RWPE1 (cell line): ENCODE measurements at regions of chr6 and their contacts with region 1.

Region 1: DNA sequence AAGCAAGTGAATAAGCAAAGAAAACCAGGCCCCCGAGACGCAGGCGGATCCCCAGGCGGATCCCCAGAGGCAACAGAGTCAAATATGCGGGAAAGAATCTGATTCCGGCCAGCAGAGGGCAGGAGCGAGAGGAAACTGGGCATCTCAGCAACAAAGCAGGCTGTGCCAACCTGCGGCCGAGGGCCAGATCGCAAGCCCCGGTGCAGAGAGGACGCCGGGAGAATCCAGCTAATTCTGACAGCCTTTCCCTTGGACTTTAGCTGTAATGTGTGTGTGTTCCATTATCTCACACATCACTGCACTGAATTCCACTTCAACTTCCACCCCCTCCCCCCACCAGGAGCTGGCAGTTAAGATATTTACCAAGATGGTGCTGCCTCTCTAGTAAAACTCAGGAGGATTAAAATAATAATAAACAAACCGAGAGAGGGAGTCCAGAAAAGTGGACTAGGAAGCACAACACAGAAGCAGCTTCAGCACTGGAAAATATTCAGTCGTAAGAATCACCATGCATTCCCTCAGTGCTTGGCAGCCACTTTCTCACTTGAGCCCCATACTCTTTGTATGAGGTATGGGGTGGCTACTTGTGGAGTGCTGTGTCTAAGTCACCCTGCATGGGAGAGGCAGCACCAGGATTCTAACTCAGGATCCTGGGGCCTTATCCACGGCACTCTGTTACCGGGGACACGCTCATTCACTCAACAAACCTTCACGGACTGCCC is 66.2 kb upstream of the SNX9 start:
- DNase-seq: peak; percentile 69
- H3K27ac ChIP-seq: no peak overlapping the region
- CTCF ChIP-seq: peak; percentile 91

Region 2: GRCh38 chr6:157648561-157648960 is 108.3 kb before region 1 on chr6:
- CTCF ChIA-PET with region 1: interaction called, 10 read pairs
- POLR2A ChIA-PET with region 1: no interaction called
- DNase-seq: peak; percentile 44
- H3K27ac ChIP-seq: peak overlapping the region; percentile 25; the same call in 1 of the 2 replicates
- CTCF ChIP-seq: no peak

Region 3: DNA sequence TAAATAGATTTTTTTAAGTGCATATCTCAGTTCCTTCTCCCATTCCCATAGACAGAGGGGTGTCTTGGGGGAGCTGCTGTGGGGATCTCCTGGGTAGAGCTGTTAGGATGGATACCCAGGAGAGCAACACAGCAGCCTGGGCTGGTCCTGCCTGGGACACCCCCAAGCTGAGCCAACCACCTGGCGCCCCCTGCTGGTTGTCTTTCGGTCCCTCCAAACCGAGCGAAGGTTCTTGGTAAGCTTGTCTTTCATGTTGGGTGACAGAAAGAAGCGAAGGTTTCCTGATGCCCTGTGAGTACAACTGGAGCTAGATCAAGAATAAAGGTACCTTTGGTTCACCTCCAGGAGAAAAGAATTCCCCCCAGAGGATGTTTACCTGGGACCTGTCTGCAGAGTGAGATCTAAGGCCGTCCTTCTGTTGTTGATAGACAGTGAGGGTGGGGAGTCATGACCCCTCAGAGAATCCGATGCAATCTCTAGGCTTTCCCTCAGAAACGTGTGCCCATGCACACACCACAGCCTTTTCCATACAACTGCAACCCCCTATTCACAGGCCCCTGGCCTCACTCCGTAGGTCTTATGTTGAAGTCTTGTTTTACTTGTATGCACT is 117.0 kb after region 1 on chr6:
- CTCF ChIA-PET with region 1: interaction called, 24 read pairs
- POLR2A ChIA-PET with region 1: interaction called, 3 read pairs
- DNase-seq: peak; percentile 63
- H3K27ac ChIP-seq: no peak overlapping the region
- CTCF ChIP-seq: peak; percentile 76